A549 (cell line): ENCODE measurements at regions of chr15 and their contacts with region 1.

Region 1: GRCh38 chr15:52139599-52140491 is 27.3 kb upstream of the BCL2L10 start:
- DNase-seq: peak; percentile 79 to 92
- ATAC-seq: peak; percentile 66 to 87
- H3K4me3 ChIP-seq: no peak overlapping the region
- H3K27ac ChIP-seq: peak overlapping the region; percentile 67 to 83
- H3K4me1 ChIP-seq: peaks cover 50% of the 10 kb centered on the region
- CTCF ChIP-seq: peak; percentile 97
- EP300 ChIP-seq: no peak
- POLR2A ChIP-seq: no peak
- RAD21 ChIP-seq: peak; percentile 91 to 92

Region 2: DNA sequence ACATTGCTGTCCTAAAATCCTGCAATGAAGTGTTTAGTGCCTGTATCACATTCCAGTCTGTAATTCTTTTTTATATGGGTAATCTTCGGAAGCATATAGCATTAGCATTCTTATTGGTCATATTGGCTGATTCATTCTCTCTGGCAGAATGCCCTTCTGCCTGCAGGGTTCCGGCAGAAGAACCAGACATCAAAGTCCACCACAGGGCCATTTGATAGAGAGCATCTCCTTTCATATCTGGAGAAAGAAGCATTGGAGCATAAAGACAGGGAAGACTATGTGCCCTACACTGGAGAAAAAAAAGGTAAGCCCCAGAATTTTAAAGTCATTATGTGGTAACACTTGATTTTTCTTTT is 270.8 kb before region 1 on chr15:
- CTCF ChIA-PET with region 1: no interaction called
- POLR2A ChIA-PET with region 1: no interaction called
- DNase-seq: peak; percentile 70 to 95
- ATAC-seq: peak; percentile 78 to 87
- H3K4me3 ChIP-seq: peak overlapping the region; percentile 32
- H3K27ac ChIP-seq: peak overlapping the region; percentile 89
- H3K4me1 ChIP-seq: peaks cover 76% of the 10 kb centered on the region
- CTCF ChIP-seq: no peak
- EP300 ChIP-seq: peak; percentile 59 to 82; a peak in 3 of 5 replicates
- POLR2A ChIP-seq: no peak
- RAD21 ChIP-seq: peak in 1 of 2 experiments; percentile 25; a peak in 2 of 5 replicates

Region 3: DNA sequence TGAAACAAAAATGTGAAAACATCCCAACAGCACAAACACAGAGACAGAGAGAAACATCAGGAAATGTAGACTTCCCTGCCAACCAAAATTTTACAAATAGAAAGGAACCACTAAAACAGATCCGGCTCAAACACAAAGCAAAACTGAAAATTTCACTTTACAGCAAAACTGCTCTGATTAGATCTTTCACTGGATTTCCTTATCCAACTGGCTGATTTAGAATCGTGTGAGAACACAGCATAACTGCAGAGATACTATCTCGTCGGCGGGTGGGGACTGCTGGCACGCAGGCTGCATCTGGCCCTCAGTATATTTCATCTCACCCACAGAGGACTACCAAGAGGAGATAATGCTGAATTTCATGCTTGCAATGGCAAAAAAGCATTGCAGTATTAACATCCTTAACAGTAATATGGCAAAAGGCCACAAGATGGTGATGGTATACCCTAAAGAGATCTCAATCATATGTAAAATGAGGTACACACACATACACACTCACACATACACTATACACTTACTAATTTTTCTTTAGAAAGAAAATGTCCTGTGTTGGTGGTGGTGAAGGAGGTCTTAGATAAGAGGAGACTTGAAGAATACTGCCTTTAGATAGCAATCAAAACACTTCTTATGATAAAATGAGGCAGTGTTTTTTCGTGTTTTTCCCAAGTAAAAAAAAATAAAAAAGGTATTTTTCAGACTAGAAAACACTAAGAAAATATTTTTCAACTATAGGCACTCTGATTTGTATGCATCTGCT is 157.7 kb before region 1 on chr15:
- CTCF ChIA-PET with region 1: interaction called, 17 read pairs
- POLR2A ChIA-PET with region 1: no interaction called
- DNase-seq: peak; percentile 83 to 89
- ATAC-seq: peak; percentile 94 to 96
- H3K4me3 ChIP-seq: peak overlapping the region; percentile 25; the same call in 2 of the 3 replicates
- H3K27ac ChIP-seq: peak overlapping the region; percentile 81 to 87
- H3K4me1 ChIP-seq: peaks cover 22% of the 10 kb centered on the region
- CTCF ChIP-seq: peak; percentile 97
- EP300 ChIP-seq: no peak
- POLR2A ChIP-seq: no peak
- RAD21 ChIP-seq: peak; percentile 96 to 98

Region 4: DNA sequence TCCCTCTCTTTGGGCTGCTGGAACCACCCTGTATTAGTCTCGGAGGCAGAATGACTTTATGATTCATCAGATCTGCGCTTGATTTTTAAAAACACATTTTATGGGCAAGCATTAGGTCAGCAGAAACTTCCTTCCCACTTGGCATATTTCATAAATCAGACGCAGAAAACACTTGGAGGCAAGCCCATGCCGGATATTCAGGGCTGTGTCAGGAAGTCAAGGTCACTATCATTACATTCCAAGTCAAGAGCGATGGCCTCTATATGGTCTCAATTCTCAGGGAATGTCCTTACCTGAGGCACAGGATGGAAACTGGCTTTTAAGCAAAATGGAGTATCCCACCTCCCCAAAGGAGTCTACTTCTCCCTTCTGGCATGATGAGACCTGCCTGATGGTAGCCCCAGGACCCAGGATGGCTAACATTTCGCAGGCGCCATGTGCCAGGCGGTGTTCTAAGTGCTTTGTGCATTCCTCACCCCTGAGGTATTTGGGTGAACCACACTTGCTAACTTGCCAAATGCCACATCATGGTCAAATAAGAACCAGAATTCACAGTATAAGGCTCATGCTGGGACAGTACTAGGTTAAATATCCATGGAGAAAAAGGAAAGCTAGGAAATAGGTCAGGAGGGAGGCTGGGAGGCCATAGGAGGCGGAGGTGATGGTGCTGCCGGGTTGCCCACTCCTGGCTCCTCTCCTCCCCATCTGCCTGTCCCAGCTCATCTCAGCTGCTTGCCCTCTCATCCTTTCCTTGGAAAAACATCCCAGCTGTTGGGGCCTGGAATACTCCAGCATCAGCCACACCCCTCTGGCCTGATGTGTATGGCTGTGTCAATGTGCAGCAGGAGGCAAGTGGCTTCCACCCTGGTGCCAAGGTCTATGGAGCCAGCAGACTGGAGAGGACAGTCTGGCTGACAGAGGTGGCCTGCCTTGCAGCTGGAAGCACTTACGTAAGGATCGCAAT is 46.0 kb before region 1 on chr15:
- CTCF ChIA-PET with region 1: interaction called, 15 read pairs
- POLR2A ChIA-PET with region 1: no interaction called
- DNase-seq: peak; percentile 46 to 86
- ATAC-seq: peak; percentile 81 to 84
- H3K4me3 ChIP-seq: no peak overlapping the region
- H3K27ac ChIP-seq: peak overlapping the region; percentile 83 to 91
- H3K4me1 ChIP-seq: peaks cover 43% of the 10 kb centered on the region
- CTCF ChIP-seq: no peak
- EP300 ChIP-seq: peak; percentile 63 to 79; a peak in 2 of 5 replicates
- POLR2A ChIP-seq: no peak
- RAD21 ChIP-seq: peak in 1 of 2 experiments; percentile 19; a peak in 3 of 5 replicates

Region 5: DNA sequence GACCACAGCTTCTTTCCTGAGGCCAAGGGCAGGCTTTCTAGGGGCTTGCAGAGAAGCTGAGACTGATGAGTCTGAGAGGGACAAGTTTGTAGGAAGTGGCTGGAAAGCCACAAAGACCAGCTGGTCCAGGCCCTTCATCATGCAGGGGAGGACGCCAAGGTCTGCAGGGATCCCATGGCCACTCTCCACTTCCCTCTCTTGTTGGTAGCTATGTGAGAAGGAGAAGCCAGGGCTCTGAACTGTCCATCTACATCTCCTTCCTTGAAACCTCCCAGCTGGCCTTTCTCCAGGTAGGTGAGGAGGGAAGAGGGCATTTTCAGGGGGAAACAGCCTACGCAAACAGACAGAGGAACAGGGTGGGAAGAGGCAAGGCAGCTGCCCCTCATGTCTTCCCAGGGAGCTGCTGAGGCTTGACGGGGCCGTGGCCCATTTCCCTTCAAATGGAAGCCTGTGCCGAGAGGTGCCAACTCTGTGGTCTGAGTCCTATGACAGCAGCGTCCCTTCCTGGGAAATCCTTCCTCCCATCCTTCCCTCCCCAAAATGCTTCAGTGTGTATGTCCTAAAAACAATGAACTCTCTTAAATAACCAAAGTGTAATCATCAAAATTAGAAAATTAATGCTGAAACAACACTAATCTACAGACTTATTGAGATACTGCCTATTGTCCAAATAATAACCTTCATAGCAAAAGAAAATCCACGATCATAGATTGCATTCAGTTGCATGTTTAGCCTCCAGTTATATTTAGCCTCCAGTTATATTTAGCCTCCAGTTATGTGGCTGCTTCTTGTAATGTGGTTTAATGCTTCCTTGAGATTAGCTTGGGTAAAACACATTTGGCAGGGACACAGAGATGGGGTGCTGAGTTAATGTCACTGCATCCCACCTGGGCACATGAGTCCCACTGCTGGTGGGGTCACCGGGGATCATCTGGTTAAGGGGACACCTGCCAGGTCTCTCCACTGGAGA is 15.3 kb after region 1 on chr15:
- CTCF ChIA-PET with region 1: interaction called, 58 read pairs
- POLR2A ChIA-PET with region 1: no interaction called
- DNase-seq: no peak
- ATAC-seq: no peak; a peak in 2 of 6 replicates
- H3K4me3 ChIP-seq: no peak overlapping the region
- H3K27ac ChIP-seq: no peak overlapping the region
- H3K4me1 ChIP-seq: no peaks in the 10 kb centered on the region
- CTCF ChIP-seq: no peak
- EP300 ChIP-seq: no peak
- POLR2A ChIP-seq: no peak
- RAD21 ChIP-seq: no peak

Region 6: DNA sequence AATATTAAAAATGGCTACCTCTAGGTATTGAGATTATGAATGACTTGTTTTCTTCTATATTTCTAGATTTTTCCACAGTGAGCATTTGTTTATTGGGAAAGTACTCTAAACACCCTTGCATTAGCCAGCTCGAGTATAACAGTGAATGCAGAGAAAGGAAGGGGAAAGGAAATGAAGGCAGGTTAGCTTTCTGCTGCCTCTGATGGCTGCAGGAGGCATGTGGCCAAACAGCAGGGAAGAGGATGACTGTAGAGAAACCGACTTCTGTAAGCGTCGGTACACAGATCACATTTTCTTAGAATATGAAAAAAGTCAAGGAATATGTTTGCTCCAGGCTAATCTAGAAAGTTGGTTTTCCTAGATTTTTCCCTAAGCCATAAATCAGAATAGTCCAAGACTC is 31.5 kb after region 1 on chr15:
- CTCF ChIA-PET with region 1: interaction called, 15 read pairs
- POLR2A ChIA-PET with region 1: no interaction called
- DNase-seq: no peak
- ATAC-seq: peak; percentile 64 to 65; a peak in 5 of 6 replicates
- H3K4me3 ChIP-seq: no peak overlapping the region
- H3K27ac ChIP-seq: no peak overlapping the region
- H3K4me1 ChIP-seq: no peaks in the 10 kb centered on the region
- CTCF ChIP-seq: no peak
- EP300 ChIP-seq: no peak
- POLR2A ChIP-seq: no peak
- RAD21 ChIP-seq: no peak

Region 7: DNA sequence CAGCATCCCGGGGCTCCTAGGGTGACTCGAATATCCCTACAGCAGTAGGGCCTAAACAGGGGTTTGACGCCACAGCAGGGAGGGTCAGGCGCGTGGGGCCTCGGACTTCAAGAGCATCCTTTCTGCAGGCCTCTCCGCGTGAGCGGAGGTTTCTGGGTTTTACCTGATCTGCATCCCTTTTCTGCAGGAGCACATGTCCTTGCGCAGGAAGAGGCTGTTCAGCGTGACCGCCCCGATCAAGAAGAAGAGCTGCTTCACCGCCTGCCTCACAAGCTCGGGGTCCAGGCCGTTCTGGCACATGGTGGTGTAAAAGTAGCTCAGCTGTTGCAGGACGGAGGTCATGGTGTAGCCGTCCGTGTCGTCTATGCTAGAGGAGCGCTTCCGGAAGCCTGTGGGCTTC is 64.9 kb after region 1 on chr15:
- CTCF ChIA-PET with region 1: no interaction called
- POLR2A ChIA-PET with region 1: no interaction called
- DNase-seq: no peak
- ATAC-seq: no peak
- H3K4me3 ChIP-seq: no peak overlapping the region
- H3K27ac ChIP-seq: no peak overlapping the region
- H3K4me1 ChIP-seq: no peaks in the 10 kb centered on the region
- CTCF ChIP-seq: no peak
- EP300 ChIP-seq: no peak
- POLR2A ChIP-seq: no peak
- RAD21 ChIP-seq: no peak